GM12878 (cell line): ENCODE measurements at regions of chr15 and their contacts with region 1.

Region 1: DNA sequence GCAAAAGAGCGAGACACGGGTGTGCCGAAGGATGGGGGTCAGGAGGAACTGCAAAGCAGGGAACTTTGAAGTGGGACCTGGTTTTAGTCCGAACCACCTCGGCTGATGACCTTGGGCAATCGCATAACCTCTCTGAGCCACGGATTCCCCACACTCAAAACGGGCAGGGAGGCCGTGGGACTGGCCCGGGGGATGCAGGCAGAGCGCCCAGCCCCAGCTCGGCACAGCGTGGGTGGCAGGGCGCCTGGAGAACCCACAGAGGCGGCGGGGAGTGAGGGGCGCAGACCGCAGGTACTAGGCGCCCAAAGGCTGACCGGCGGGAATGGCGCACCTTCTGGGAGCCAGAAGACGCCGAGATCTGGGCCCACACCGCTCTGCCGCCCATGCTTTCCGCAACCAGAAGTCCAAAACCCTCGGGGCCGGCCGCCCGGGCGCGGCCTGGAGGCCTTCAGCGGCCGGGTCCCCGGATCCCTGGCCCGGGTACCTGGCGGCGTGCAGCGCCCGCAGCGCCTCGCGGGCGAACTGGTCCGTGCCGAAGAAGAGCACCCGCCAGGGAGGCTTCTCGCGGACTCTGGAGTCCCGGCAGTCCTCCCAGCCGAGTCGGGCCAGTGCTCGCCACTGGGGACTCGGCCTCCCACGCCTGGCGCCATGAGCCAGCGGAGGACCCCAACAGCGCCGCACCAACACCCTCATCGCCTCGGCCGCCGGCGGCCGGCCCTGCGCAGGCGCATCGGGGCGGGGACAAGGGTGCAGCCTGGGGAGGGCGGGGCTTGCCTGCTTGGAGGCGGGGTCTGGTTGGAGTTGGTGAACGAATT is at the start of gene MTFMT:
- DNase-seq: no peak
- ATAC-seq: peak; percentile 96
- H3K4me3 ChIP-seq: peak within 1 kb of the TSS; percentile 95
- H3K27ac ChIP-seq: peak within 1 kb of the TSS; percentile 60
- H3K4me1 ChIP-seq: peaks cover 11% of the 10 kb centered on the region
- H3K27me3 ChIP-seq: no peaks in the 10 kb centered on the region
- CTCF ChIP-seq: no peak
- EP300 ChIP-seq: no peak
- POLR2A ChIP-seq: peak; percentile 94
- RAD21 ChIP-seq: no peak
- polyA plus RNA-seq, gene MTFMT: 1.7 to 3.3 TPM

Region 2: DNA sequence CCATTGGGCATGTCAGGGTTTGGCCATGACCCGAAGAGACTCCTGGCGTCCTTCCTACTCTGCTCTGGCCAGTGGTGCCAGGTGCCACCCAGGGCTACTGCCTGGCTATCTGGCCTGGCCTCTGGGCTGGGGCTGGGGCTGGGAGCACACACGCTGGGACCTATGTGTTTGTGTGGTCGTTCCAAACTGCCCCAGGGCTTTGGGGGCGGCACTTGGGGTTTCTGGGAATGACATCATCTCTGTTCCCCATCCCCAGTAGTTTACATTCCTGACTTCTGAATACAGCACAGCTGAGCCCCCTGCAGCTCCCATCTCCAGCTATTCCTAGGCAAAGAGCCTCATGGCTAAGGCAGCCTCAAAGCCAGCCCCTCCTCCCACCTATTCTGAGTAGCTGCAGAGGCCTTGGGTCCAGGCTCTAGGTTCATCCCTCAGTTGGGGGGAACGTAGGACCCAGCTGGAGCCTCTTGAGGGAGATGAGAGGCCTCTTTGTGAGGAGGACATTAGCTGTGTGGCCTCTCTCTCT is 163.1 kb before region 1 on chr15:
- CTCF ChIA-PET with region 1: no interaction called
- POLR2A ChIA-PET with region 1: no interaction called
- RAD21 ChIA-PET with region 1: no interaction called
- SMC1A ChIA-PET with region 1: no interaction called
- in situ Hi-C with region 1: no loop called
- intact Hi-C with region 1: no loop called
- DNase-seq: no peak
- ATAC-seq: no peak; the same call in 2 of the 3 replicates
- H3K4me3 ChIP-seq: no peak overlapping the region
- H3K27ac ChIP-seq: no peak overlapping the region
- H3K4me1 ChIP-seq: peaks cover 6% of the 10 kb centered on the region
- H3K27me3 ChIP-seq: no peaks in the 10 kb centered on the region
- CTCF ChIP-seq: no peak
- EP300 ChIP-seq: no peak
- POLR2A ChIP-seq: no peak
- RAD21 ChIP-seq: no peak

Region 3: GRCh38 chr15:64989416-64990167 is 39.5 kb before region 1 on chr15 and contains the start of gene SPG21:
- CTCF ChIA-PET with region 1: interaction called, 3 read pairs
- POLR2A ChIA-PET with region 1: interaction called, 4 read pairs
- RAD21 ChIA-PET with region 1: no interaction called
- SMC1A ChIA-PET with region 1: interaction called, 3 read pairs
- in situ Hi-C with region 1: no loop called
- intact Hi-C with region 1: loop called (anchors 2 kb)
- DNase-seq: peak; percentile 91
- ATAC-seq: peak; percentile 95
- H3K4me3 ChIP-seq: peak within 1 kb of the TSS; percentile 82
- H3K27ac ChIP-seq: peak within 1 kb of the TSS; percentile 92
- H3K4me1 ChIP-seq: peaks cover 4% of the 10 kb centered on the region
- H3K27me3 ChIP-seq: no peaks in the 10 kb centered on the region
- CTCF ChIP-seq: no peak
- EP300 ChIP-seq: peak in 1 of 2 experiments; percentile 84; a peak in 2 of 4 replicates
- POLR2A ChIP-seq: peak; percentile 85
- RAD21 ChIP-seq: no peak
- polyA plus RNA-seq, gene SPG21: 25.5 to 29.6 TPM

Region 4: DNA sequence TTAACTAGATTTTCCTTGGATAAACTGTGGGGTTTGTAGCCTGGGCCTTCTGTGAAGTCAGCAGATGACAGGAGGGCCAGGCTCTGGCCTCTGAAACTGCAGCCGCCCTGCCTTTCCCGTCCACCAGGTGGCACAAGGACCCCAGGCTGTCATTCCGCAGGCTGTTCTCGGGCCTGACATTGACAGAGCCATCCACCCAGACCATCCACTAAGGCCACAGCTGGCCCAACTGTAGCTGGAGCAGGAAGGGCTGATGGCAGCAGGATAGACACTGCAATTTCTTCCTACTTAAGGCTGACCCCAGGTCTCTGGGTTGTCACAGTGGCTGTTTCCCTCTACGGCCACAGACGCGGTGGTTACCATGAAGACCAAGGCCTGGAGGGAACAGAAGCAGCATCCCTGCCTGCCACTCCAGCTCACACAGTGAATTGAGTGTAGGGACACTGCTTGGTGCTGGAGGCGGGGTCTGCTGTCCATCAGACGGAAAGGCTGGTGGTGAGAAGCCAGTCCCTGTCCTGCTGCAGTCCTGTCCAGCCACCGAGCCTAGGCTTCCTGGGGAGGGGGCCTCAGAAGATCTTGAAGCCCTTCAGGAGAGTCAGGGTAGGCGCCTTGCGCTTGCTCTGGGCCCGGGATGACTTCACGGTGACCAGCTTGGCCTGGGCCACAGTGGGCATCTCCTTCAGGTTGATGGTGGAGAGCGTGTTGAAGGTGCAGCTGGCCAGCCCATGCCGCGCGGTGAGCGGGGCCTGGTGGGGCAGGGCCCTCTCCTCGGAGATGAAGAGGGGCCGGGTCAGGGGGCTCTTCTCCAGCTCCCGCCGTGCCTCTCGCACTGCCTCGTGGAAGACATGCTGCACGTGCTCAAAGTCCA is 25.4 kb after region 1 on chr15:
- CTCF ChIA-PET with region 1: interaction called, 38 read pairs
- POLR2A ChIA-PET with region 1: interaction called, 6 read pairs
- RAD21 ChIA-PET with region 1: interaction called, 15 read pairs
- SMC1A ChIA-PET with region 1: interaction called, 6 read pairs
- in situ Hi-C with region 1: no loop called
- intact Hi-C with region 1: no loop called
- DNase-seq: no peak
- ATAC-seq: peak; percentile 82
- H3K4me3 ChIP-seq: no peak overlapping the region
- H3K27ac ChIP-seq: no peak overlapping the region
- H3K4me1 ChIP-seq: peaks cover 6% of the 10 kb centered on the region
- H3K27me3 ChIP-seq: no peaks in the 10 kb centered on the region
- CTCF ChIP-seq: peak; percentile 89 to 93 (median 89)
- EP300 ChIP-seq: no peak
- POLR2A ChIP-seq: no peak
- RAD21 ChIP-seq: peak; percentile 84

Region 5: DNA sequence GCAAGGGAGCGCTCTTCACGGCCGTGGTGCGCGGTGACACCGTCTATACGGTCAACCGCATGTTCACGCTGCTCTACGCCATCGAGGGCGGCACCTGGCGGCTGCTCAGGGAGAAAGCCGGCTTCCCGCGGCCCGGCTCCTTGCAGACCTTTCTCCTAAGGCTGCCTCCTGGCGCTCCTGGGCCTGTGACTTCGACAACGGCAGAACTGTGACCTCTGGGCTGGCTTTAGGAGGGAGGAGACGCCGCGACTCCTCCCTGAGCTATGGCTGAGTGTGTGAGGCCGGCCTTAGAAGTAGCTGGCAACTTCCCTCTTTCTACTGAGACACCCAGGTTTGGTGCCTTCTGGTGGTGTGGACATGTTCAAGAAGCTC is 48.8 kb after region 1 on chr15:
- CTCF ChIA-PET with region 1: interaction called, 17 read pairs
- POLR2A ChIA-PET with region 1: no interaction called
- RAD21 ChIA-PET with region 1: interaction called, 5 read pairs
- SMC1A ChIA-PET with region 1: interaction called, 3 read pairs
- in situ Hi-C with region 1: no loop called
- intact Hi-C with region 1: loop called (anchors 1 kb)
- DNase-seq: no peak
- ATAC-seq: peak; percentile 63
- H3K4me3 ChIP-seq: no peak overlapping the region
- H3K27ac ChIP-seq: no peak overlapping the region
- H3K4me1 ChIP-seq: no peaks in the 10 kb centered on the region
- H3K27me3 ChIP-seq: no peaks in the 10 kb centered on the region
- CTCF ChIP-seq: peak; percentile 3 to 45 (median 43); a peak in 3 of 6 replicates
- EP300 ChIP-seq: no peak
- POLR2A ChIP-seq: no peak
- RAD21 ChIP-seq: no peak

Region 6: DNA sequence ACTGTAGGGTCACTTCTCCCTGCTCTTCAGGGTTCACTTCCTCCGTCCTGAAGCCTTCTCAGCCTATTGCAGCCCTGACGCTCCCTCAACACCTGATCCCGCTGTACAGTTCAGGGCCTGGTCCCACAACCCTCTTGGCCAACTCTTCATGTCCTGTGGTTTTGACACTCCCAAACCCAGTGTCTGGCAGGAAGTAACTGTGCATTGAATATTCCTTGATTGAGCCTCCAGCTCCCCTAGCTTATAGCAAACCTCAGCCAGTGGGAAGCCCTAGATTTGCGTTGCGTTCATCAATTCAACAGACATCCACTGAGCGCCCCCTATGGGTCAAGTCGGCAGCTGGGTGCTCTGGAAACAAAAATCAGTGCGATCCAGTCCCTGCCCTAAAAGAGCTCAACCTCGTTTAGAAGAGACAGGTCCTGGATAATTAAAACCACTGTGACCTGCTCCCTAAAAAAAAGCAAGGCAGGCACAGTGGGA is 72.3 kb after region 1 on chr15:
- CTCF ChIA-PET with region 1: interaction called, 13 read pairs
- POLR2A ChIA-PET with region 1: no interaction called
- RAD21 ChIA-PET with region 1: interaction called, 9 read pairs
- SMC1A ChIA-PET with region 1: interaction called, 9 read pairs
- in situ Hi-C with region 1: no loop called
- intact Hi-C with region 1: no loop called
- DNase-seq: no peak
- ATAC-seq: peak; percentile 64
- H3K4me3 ChIP-seq: no peak overlapping the region
- H3K27ac ChIP-seq: no peak overlapping the region
- H3K4me1 ChIP-seq: no peaks in the 10 kb centered on the region
- H3K27me3 ChIP-seq: no peaks in the 10 kb centered on the region
- CTCF ChIP-seq: peak; percentile 55 to 76 (median 72)
- EP300 ChIP-seq: no peak
- POLR2A ChIP-seq: no peak
- RAD21 ChIP-seq: peak; percentile 65